ENCODE measurements at regions of chr12 and their contacts with region 1.

Region 1: DNA sequence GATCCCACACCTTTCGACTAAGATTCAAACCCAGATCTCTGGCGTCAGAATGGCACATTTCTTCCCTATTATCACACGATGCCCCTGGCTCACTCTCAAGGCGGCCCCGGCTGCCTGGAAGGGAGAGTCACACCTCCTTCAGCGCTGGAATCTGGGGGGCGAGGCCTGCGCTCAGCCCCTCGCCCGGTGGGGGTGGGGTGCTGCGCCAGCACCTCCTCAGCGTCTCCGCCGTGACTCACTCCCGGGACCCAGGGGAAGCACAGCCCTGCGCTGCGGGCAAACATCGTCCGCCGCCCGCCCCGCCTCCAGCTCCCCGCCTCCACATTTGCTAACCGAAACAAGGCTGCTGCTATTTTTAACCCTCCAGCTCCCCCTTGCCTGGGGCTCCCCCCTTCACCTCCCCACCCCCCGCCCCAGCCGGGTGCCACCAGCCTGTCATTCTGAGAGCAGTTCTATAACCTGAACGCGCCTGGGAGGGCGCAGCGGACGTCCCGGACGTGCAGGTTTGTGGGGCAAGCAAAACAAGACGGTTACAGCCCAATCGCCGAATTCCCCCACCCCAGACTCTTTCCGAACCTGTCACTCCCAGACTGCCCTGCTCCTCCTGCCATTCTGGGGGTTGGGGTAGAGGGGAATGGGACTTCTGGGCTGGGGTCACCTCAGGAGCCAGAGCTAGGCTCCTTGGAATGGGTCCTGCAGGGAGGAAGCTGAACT is 6.7 kb downstream of the HDAC7 start:
- DNase-seq: peak; percentile 86
- H3K4me3 Mint-ChIP-seq: peak overlapping the region; percentile 95
- H3K27ac Mint-ChIP-seq: peak overlapping the region; percentile 100
- H3K4me1 Mint-ChIP-seq: peaks cover 75% of the 10 kb centered on the region
- H3K27me3 Mint-ChIP-seq: no peaks in the 10 kb centered on the region

Region 2: GRCh38 chr12:47391566-47391965 is 421.4 kb before region 1 on chr12:
- intact Hi-C with region 1: loop called (anchors 5 kb)
- DNase-seq: peak; percentile 54
- H3K4me3 Mint-ChIP-seq: peak overlapping the region; percentile 64
- H3K27ac Mint-ChIP-seq: peak overlapping the region; percentile 100
- H3K4me1 Mint-ChIP-seq: peaks cover 75% of the 10 kb centered on the region
- H3K27me3 Mint-ChIP-seq: no peaks in the 10 kb centered on the region

Region 3: DNA sequence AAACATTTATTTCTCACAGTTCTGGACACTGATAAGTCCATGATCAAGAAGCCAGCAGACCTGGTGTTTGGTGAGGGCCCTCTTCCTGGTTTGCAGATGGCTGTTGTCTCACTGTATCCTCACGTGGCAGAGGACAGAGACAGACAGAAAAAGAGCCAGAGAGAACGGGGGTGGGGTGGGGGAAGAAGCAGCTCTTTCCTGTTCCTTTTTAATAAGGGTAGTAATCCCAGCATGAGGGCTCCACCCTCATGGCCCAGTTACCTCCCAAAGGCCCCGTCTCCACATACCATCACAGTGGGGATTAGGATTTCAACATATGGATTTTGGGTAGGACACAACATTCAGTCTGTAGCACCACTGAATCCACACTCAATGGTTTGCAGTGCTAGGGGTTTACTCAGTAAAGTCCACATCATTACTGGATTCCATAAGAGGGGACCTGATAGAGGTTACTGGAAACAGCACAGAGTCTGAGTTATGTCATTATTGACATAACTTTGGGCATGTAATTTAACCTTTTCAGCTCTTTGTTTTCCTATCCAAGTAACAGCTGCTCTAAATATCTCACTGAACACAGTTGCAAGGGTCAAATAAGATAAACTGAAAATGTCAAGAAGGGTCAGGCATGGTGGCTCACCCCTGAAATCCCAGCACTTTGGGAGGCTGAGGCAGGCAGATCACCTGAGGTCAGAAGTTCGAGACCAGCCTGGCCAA is 160.3 kb before region 1 on chr12:
- intact Hi-C with region 1: no loop called
- DNase-seq: no peak
- H3K4me3 Mint-ChIP-seq: no peak overlapping the region
- H3K27ac Mint-ChIP-seq: no peak overlapping the region
- H3K4me1 Mint-ChIP-seq: peaks cover 20% of the 10 kb centered on the region
- H3K27me3 Mint-ChIP-seq: no peaks in the 10 kb centered on the region

Region 4: DNA sequence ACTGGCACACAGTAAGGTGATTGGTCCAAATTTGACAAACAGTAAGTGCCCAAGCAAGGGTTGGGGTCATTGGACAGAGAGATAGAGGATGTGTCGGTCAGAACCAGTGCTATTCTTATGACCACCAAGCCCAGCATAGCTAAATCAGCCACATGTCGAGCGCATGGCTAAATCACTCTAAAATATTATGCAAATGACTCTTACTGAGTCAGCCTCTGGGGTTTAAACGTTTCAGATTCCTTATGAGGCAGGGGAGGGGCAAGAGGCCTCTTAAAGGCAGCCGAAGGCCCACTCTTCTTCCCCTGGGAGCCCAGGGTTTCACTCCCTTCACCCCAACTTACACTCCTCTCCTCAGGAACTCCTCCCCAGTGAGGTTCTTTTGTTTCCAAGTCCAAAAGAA is 87.1 kb before region 1 on chr12:
- intact Hi-C with region 1: no loop called
- DNase-seq: no peak
- H3K4me3 Mint-ChIP-seq: no peak overlapping the region
- H3K27ac Mint-ChIP-seq: no peak overlapping the region
- H3K4me1 Mint-ChIP-seq: peaks cover 21% of the 10 kb centered on the region
- H3K27me3 Mint-ChIP-seq: no peaks in the 10 kb centered on the region

Region 5: GRCh38 chr12:47779301-47779942 is 33.5 kb before region 1 on chr12:
- intact Hi-C with region 1: loop called (anchors 2 kb)
- DNase-seq: peak; percentile 85
- H3K4me3 Mint-ChIP-seq: no peak overlapping the region
- H3K27ac Mint-ChIP-seq: no peak overlapping the region
- H3K4me1 Mint-ChIP-seq: peaks cover 27% of the 10 kb centered on the region
- H3K27me3 Mint-ChIP-seq: no peaks in the 10 kb centered on the region

Region 6: DNA sequence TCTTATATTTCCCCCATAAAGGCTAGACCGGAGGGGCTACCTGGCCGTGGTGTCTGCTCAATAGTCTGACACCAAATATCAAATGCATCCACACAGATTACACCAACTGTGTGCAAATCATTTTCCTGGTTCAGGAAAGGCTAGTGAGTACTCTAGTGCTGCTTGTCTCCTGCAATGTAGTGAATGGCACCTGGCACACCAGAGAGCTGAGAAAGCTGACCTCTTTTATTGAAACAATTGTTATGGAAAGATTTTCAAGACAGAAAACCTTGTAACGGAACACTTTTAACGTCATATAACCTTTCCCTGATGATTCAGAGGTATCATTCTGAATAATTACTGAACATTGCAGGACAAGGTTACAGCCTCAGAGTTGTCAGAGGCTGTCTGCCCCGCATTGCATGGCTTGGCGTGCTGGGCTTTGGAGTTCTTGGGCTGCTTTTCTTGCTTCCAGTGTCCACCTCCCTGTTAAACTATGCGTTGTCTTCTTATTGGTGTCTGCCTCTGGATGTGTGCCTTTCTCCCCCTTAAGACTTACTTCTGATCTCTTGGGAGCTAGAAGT is 47.4 kb after region 1 on chr12:
- intact Hi-C with region 1: loop called (anchors 2 kb)
- DNase-seq: no peak
- H3K4me3 Mint-ChIP-seq: peak overlapping the region; percentile 53
- H3K27ac Mint-ChIP-seq: peak overlapping the region; percentile 99
- H3K4me1 Mint-ChIP-seq: peaks cover 63% of the 10 kb centered on the region
- H3K27me3 Mint-ChIP-seq: no peaks in the 10 kb centered on the region

Measured in activated T-helper 2 cell treated with anti-CD3 and anti-CD28 coated beads, Interferon-gamma antibody, Interleukin-2, Interleukin-4, amounts not matched to agents 10 μg/mL and 5 μg/mL and 100 μg/mL, durations not matched to agents 14 hours and 24 hours and 36 hours (primary cell).